ENCODE measurements at regions of chr1 and their contacts with region 1.

Region 1: DNA sequence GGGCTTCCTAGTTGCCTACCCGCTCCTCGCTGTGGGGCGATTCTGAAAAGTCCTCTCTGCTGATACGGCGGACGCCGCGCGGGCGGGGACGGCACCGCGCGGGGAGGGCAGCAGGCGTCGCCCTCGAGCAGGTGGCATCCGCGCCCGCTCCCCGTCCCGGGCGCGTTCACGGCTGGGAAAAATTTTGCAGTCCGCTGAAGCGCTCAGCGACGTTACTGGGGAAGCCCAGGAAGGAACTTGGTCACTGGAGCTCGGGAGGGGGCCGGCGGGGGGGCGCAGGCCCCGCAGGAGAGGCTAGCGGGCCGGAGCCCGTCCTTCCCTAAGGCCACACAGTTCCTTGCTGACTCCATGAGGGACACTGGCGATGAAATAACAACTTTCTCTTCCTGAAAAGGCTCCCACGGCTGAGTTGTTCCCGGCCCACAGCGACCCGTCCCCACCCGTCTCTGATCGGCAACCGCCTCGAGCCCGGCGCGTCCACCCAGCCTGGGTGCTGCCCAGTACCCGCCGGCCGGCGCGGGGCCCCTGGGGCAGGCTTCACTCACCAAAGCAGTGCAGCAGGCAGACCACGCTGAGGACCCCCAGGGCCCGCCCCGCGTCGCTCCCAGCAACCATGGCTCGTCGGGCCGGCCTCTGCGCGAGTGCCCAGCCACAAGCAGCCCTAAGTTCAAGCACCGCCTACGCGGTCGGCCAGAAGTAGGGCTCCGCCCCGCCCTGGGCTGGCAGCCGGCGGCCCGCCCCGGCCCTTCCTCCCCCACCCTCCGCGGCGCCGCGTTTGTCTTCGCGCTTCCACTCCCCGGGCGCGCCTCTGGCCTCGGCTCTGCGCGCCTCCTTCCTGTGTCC is at the start of gene CD58:
- DNase-seq: peak; percentile 81
- H3K4me3 Mint-ChIP-seq: peak within 1 kb of the TSS; percentile 90
- H3K27ac Mint-ChIP-seq: peak within 1 kb of the TSS; percentile 90
- H3K4me1 Mint-ChIP-seq: peaks cover 74% of the 10 kb centered on the region
- H3K27me3 Mint-ChIP-seq: no peaks in the 10 kb centered on the region
- total RNA-seq, gene CD58: 35.3 and 37.8 TPM in 2 replicates

Region 2: GRCh38 chr1:115893615-115894014 is 677.0 kb before region 1 on chr1:
- intact Hi-C with region 1: no loop called
- DNase-seq: no peak
- H3K4me3 Mint-ChIP-seq: no peak overlapping the region
- H3K27ac Mint-ChIP-seq: no peak overlapping the region
- H3K4me1 Mint-ChIP-seq: no peaks in the 10 kb centered on the region
- H3K27me3 Mint-ChIP-seq: peaks cover 2% of the 10 kb centered on the region

Region 3: DNA sequence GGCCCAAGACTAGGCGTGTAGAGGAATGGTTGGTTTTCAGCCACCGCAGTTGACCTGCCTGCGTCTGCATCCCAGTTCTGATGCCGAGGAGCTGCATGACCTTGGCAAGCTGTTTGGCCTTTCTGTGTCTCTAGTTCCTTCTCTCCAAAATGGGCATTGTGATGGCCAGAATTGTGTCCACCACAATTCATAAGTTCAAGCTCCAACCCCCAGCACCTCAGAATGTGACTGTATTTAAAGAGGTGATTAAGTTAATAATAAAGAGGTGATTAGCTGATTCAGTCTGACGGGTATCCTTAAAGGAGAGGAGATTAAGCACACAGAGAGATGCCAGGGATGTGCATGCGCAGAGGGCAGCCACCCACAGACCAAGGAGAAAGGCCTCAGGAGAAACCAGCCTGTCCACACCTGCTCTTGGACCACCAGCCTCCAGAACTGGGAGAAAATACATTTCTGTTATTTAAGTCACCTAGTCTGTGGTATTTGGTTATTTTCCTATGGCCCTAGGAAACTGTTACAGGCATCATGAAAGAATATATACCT is 430.9 kb before region 1 on chr1:
- intact Hi-C with region 1: loop called (anchors 1 kb)
- DNase-seq: no peak
- H3K4me3 Mint-ChIP-seq: no peak overlapping the region
- H3K27ac Mint-ChIP-seq: no peak overlapping the region
- H3K4me1 Mint-ChIP-seq: peaks cover 12% of the 10 kb centered on the region
- H3K27me3 Mint-ChIP-seq: peaks cover 6% of the 10 kb centered on the region

Region 4: GRCh38 chr1:116457946-116458604 is 112.5 kb before region 1 on chr1:
- intact Hi-C with region 1: no loop called
- DNase-seq: no peak
- H3K4me3 Mint-ChIP-seq: no peak overlapping the region
- H3K27ac Mint-ChIP-seq: no peak overlapping the region
- H3K4me1 Mint-ChIP-seq: no peaks in the 10 kb centered on the region
- H3K27me3 Mint-ChIP-seq: peaks cover 9% of the 10 kb centered on the region

Region 5: GRCh38 chr1:116514708-116515525 is 55.7 kb before region 1 on chr1:
- intact Hi-C with region 1: loop called (anchors 1 kb)
- DNase-seq: peak; percentile 74
- H3K4me3 Mint-ChIP-seq: peak overlapping the region; percentile 75
- H3K27ac Mint-ChIP-seq: peak overlapping the region; percentile 97
- H3K4me1 Mint-ChIP-seq: peaks cover 80% of the 10 kb centered on the region
- H3K27me3 Mint-ChIP-seq: no peaks in the 10 kb centered on the region

Region 6: DNA sequence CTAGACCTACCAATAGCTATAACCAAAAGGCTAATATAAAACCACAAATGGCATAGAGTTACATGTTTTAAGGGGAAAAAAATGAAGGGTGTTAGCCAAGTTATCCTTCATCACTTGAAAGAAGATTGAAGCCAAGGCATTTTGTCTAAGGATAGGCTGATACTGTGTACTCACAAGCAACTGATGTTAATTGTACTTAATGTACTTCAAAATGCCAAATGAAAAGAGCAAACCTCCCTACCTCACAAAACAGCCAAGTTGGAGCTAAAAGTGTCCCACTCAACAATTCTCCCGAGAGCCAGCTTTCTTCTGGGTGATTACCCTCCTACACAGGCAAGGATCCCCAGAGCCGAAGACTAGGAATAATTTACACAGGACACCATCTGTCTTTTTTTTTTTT is 101.3 kb after region 1 on chr1:
- intact Hi-C with region 1: loop called (anchors 1 kb)
- DNase-seq: no peak
- H3K4me3 Mint-ChIP-seq: no peak overlapping the region
- H3K27ac Mint-ChIP-seq: no peak overlapping the region
- H3K4me1 Mint-ChIP-seq: peaks cover 4% of the 10 kb centered on the region
- H3K27me3 Mint-ChIP-seq: peaks cover 43% of the 10 kb centered on the region

Region 7: GRCh38 chr1:116817582-116818064 is 247.0 kb after region 1 on chr1:
- intact Hi-C with region 1: loop called (anchors 5 kb)
- DNase-seq: peak; percentile 55
- H3K4me3 Mint-ChIP-seq: peak overlapping the region; percentile 56
- H3K27ac Mint-ChIP-seq: peak overlapping the region; percentile 56
- H3K4me1 Mint-ChIP-seq: peaks cover 59% of the 10 kb centered on the region
- H3K27me3 Mint-ChIP-seq: no peaks in the 10 kb centered on the region

Region 8: GRCh38 chr1:117001254-117001927 is 430.8 kb after region 1 on chr1 and contains the start of gene CD101:
- intact Hi-C with region 1: loop called (anchors 5 kb)
- DNase-seq: no peak
- H3K4me3 Mint-ChIP-seq: peak within 1 kb of the TSS; percentile 3
- H3K27ac Mint-ChIP-seq: peak within 1 kb of the TSS; percentile 79
- H3K4me1 Mint-ChIP-seq: peaks cover 36% of the 10 kb centered on the region
- H3K27me3 Mint-ChIP-seq: peaks cover 3% of the 10 kb centered on the region
- total RNA-seq, gene CD101: 0.80 and 1.0 TPM in 2 replicates

Region 9: GRCh38 chr1:117664314-117664713 is 1093.7 kb after region 1 on chr1:
- intact Hi-C with region 1: loop called (anchors 5 kb)
- DNase-seq: peak; percentile 73
- H3K4me3 Mint-ChIP-seq: peak overlapping the region; percentile 57
- H3K27ac Mint-ChIP-seq: peak overlapping the region; percentile 84
- H3K4me1 Mint-ChIP-seq: peaks cover 88% of the 10 kb centered on the region
- H3K27me3 Mint-ChIP-seq: peaks cover 6% of the 10 kb centered on the region